ENCODE measurements at regions of chr7 and their contacts with region 1.

Region 1: GRCh38 chr7:36315309-36316133 is 74.1 kb upstream of the ANLN start:
- DNase-seq: no peak
- H3K4me3 ChIP-seq: no peak overlapping the region
- H3K27me3 ChIP-seq: peaks cover 2% of the 10 kb centered on the region; the same call in 1 of the 2 replicates
- CTCF ChIP-seq: no peak

Region 2: GRCh38 chr7:35985126-35985754 is 330.3 kb before region 1 on chr7:
- CTCF ChIA-PET with region 1: interaction called, 104 read pairs
- POLR2A ChIA-PET with region 1: no interaction called
- DNase-seq: no peak
- H3K4me3 ChIP-seq: no peak overlapping the region
- H3K27me3 ChIP-seq: peaks cover 3% of the 10 kb centered on the region; the same call in 1 of the 2 replicates
- CTCF ChIP-seq: peak; percentile 97

Region 3: DNA sequence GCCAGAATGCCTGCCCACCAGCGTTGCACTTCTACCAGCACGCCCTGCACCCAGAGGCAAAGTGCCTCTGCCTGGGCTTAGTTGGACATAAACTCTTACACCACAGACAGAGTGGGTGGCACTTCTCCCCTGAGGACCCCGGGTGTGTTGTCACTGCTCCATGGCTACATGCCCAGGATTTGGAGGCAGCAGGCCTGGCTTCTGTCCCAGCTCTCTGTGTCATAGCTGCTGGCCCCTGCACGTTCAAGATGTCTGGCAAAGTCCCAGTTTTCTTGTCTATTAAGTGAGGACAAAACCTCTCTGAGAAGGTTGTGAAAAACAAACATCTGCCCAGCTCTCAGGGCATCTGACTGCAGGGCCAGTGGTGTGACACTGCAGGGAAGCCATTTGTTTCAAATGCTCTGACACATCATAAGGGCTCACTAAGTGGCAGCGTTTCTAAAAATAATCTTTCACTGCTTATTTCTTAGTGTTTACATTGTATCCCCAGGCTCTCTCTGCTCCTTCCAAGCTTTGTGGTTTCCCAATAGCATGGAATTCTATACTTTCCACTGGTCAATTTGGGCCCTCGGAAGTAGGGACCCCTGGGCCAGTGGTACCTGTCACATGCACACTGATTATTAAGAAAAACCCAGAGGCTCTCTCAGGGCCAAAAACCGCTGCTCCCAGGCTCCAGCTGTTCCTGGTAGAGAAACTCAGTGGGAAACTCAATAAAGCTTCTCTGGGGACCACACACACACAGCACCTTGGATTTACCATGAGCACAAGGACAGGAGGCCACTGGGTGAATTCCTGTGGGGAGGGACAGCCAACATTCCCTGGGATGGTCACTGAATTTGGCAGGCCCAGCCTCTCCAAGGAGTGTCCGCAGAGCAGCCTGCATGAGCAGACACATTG is 12.1 kb before region 1 on chr7:
- CTCF ChIA-PET with region 1: interaction called, 86 read pairs
- POLR2A ChIA-PET with region 1: no interaction called
- DNase-seq: peak; percentile 87
- H3K4me3 ChIP-seq: no peak overlapping the region
- H3K27me3 ChIP-seq: no peaks in the 10 kb centered on the region; the same call in 1 of the 2 replicates
- CTCF ChIP-seq: no peak

Region 4: GRCh38 chr7:36336390-36336789 is 20.9 kb after region 1 on chr7:
- CTCF ChIA-PET with region 1: interaction called, 29 read pairs
- POLR2A ChIA-PET with region 1: no interaction called
- DNase-seq: no peak
- H3K4me3 ChIP-seq: no peak overlapping the region
- H3K27me3 ChIP-seq: no peaks in the 10 kb centered on the region
- CTCF ChIP-seq: no peak